Thyroid gland (tissue), 4 donors: ENCODE measurements at regions of chr4 and their contacts with region 1.

Region 1: GRCh38 chr4:82462415-82462831 is 32.0 kb downstream of the ENOPH1 start:
- DNase-seq: peak; percentile 83 to 84
- H3K4me3 ChIP-seq: no peak overlapping the region
- H3K27ac ChIP-seq: no peak overlapping the region
- H3K4me1 ChIP-seq: no peaks in the 10 kb centered on the region
- H3K27me3 ChIP-seq: no peaks in the 10 kb centered on the region
- CTCF ChIP-seq: peak; percentile 47 to 92 (median 69)
- POLR2A ChIP-seq: no peak

Region 2: DNA sequence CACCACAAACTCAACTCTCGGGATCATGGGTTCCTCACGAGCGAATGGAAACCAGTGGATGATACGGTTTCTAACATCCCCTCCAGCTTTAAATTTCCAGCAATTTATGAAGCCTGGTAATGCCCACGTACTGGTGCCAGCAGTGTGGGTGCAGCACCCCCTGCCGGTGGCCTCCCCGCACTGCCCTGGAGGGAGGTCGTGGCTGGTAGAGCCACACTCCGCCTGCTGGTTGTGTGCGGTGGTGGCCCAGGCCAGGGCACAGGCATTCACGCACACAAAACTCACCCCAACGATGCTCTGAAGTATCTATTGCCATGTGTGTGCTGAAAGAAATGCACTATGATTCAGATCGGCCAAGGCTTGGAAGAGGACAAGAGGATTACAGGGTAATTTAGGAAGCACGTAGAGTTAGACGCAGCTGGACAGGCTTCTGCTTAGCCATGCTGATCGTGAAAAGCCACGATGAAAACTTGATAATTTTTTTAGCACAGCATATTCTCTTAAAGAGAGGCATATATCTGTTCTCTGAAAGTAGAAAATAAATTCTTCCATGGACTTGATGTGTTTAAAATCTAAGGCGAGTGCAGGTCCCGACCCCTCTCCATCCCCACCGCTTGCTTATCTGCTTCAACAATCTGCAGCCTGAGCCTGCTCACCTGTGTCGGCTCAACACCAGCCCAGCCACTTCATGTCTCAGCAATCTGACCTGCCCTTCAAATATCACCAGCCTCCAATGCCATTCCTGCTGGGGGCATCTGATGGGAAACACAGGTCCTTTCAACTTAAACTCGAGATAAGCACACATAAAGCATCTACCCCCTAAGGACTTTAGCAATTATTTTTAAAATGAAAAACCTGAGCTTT is 277.1 kb after region 1 on chr4:
- intact Hi-C with region 1: loop called (anchors 5 kb)
- DNase-seq: peak; percentile 80 to 81
- H3K4me3 ChIP-seq: no peak overlapping the region
- H3K27ac ChIP-seq: peak overlapping the region; percentile 18 to 63 (median 51)
- H3K4me1 ChIP-seq: peaks cover 10 to 27% of the 10 kb centered on the region in 2 donors
- H3K27me3 ChIP-seq: no peaks in the 10 kb centered on the region
- CTCF ChIP-seq: peak; percentile 95 to 99 (median 98)
- POLR2A ChIP-seq: no peak

Region 3: GRCh38 chr4:83248486-83248885 is 786.1 kb after region 1 on chr4:
- intact Hi-C with region 1: no loop called
- DNase-seq: no peak
- H3K4me3 ChIP-seq: no peak overlapping the region
- H3K27ac ChIP-seq: no peak overlapping the region
- H3K4me1 ChIP-seq: peaks cover 0 to 11% of the 10 kb centered on the region in 2 donors
- H3K27me3 ChIP-seq: no peaks in the 10 kb centered on the region
- CTCF ChIP-seq: no peak
- POLR2A ChIP-seq: no peak

Region 4: GRCh38 chr4:83284193-83285054 is 822.0 kb after region 1 on chr4 and contains the start of gene COQ2:
- intact Hi-C with region 1: loop called (anchors 10 kb)
- DNase-seq: peak; percentile 96
- H3K4me3 ChIP-seq: peak within 1 kb of the TSS; percentile 4 to 71 (median 52)
- H3K27ac ChIP-seq: peak within 1 kb of the TSS; percentile 16 to 94 (median 93)
- H3K4me1 ChIP-seq: peaks cover 0 to 15% of the 10 kb centered on the region in 2 donors
- H3K27me3 ChIP-seq: no peaks in the 10 kb centered on the region
- CTCF ChIP-seq: peak in 4 of 6 experiments; percentile 23 to 52 (median 41)
- POLR2A ChIP-seq: peak in 1 of 2 donors; percentile 87
- total RNA-seq, gene COQ2: 6.0 to 29.1 (median 14.0) TPM